ENCODE measurements at regions of chr17 and their contacts with region 1.

Region 1: DNA sequence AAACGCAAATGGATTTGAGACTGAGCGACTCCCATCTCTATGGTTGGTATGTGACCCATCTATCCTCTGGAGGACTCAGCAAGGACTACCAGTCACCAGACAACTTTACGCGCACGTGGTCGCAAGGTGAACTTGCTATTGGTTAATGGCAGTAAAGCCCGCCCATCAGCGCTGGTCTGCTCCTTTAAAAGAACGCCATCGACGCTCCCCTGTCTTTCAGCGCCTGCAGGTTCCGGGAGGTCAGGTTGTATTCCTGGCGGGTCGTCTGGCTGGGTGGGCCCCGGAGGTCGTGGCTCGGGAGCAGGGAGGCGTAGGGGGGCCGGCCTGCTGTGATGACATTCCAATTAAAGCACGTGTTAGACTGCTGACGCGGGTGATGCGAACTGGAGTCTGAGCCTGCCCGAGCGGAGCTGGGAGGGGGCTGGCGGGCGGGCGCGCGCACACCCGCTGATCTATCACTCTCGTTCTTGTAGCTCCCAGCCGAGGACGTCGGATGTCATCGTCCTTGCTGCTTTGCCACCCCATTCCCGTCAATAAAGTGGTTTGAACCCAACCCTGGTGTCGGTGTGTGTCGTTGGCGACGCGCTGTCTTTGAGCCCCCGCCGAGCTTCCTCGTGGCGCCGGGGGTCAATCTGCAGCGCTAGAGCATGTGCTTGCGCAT is 15.9 kb upstream of the ERN1 start:
- DNase-seq: peak; percentile 91 to 93
- H3K4me3 ChIP-seq: peak overlapping the region; percentile 79 to 91 (median 82)
- H3K27ac ChIP-seq: peak overlapping the region; percentile 95
- H3K4me1 ChIP-seq: peaks cover 0 to 9% (median 3%) of the 10 kb centered on the region in 4 experiments; a peak in 5 of 7 replicates
- H3K27me3 ChIP-seq: no peaks in the 10 kb centered on the region
- CTCF ChIP-seq: no peak
- EP300 ChIP-seq: no peak; a peak in 1 of 3 replicates
- POLR2A ChIP-seq: peak; percentile 98 to 100
- RAD21 ChIP-seq: no peak

Region 2: DNA sequence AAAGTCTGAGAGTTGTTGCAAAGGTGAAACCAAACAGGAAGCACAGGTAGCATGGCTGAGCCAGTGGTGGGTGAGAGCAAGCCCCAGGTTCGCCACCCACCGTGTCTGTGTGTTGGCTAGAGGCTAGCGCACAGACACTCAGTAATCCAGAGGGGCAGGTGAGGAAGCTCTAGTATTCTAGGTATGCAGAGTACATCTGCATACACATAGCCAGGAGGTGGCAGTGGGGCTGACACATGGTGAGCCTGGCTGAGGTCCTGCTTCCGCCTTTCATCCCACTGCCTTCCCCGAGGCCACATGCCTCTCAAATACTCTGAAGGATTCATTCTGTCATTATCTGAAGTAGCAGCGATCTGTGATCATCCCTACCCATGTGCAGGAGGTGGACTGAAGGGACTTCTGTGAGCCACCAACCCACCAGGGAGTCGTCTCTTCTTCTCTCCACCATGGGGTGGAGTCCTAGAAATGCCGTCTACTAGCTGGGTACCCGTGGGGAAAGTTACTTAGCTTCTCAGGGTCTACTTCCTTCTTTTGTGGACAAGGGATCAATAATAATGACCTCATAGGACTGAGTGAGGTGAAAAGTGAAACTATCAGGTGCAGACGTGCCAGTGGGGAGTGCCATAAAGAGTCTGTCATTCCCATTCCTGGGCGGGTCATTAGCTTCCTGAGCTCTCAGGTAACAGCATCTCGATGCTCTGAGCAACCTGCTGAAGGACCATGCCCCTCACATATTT is 89.5 kb before region 1 on chr17:
- CTCF ChIA-PET with region 1: interaction called, 238 read pairs
- POLR2A ChIA-PET with region 1: interaction called, 32 read pairs
- DNase-seq: peak; percentile 43 to 54
- H3K4me3 ChIP-seq: no peak overlapping the region
- H3K27ac ChIP-seq: no peak overlapping the region
- H3K4me1 ChIP-seq: peaks cover 3 to 9% (median 6%) of the 10 kb centered on the region in 4 experiments
- H3K27me3 ChIP-seq: no peaks in the 10 kb centered on the region
- CTCF ChIP-seq: no peak
- EP300 ChIP-seq: no peak
- POLR2A ChIP-seq: no peak
- RAD21 ChIP-seq: no peak

Region 3: DNA sequence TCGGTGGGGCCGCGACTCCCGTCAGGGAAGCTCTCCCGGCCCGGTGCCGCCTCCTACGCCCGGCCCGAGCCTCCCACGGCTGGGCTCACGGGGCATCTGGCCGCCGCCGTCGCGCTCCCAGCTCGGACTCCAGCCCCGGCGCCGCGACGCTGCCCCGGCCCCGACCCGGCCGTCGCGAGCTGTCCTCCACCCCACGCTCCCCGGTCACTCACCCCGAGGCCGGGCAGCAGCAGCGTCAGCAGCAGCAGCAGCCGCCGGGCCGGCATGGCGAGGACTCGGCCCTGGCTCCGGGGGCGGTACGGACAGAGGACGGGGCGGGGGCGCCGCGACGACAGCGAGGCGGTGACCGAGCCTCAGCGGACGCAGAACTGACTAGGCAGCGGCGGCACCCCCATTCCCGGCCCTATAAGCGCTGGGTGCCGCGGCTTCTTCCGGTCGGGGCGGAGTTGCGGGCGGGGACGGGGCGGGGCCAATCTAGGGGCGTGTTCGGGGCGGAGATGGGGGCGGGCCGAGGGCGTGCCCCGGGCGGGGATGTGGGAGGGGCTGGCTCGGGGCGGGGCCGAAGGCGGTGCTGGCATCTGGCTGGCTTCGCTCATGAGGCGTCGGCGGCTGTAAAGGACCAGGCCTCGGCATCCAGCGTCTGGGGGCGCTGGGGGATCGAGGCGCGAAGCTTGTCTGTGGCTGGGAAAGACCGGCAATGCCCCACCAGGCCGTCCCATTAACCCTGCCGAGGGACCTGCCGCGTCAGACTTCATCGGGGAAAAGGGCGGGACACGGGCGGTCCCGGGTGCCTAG is 15.9 kb before region 1 on chr17 and contains the start of gene ERN1:
- CTCF ChIA-PET with region 1: interaction called, 13 read pairs
- POLR2A ChIA-PET with region 1: interaction called, 164 read pairs
- DNase-seq: peak; percentile 81 to 91
- H3K4me3 ChIP-seq: peak within 1 kb of the TSS; percentile 69 to 79 (median 74)
- H3K27ac ChIP-seq: no peak within 1 kb of the TSS
- H3K4me1 ChIP-seq: no peaks in the 10 kb centered on the region
- H3K27me3 ChIP-seq: peaks cover 0 to 21% (median 11%) of the 10 kb centered on the region in 4 experiments; a peak in 6 of 7 replicates
- CTCF ChIP-seq: 0 out of 4 replicates have a peak, but pooled peaks of 1 of the 3 experiments have one; percentile 11
- EP300 ChIP-seq: no peak
- POLR2A ChIP-seq: peak; percentile 75 to 76
- RAD21 ChIP-seq: peak in 1 of 2 experiments; percentile 5; a peak in 1 of 4 replicates
- total RNA-seq, gene ERN1: 3.9 and 5.7 TPM in 2 replicates

Region 4: GRCh38 chr17:64202675-64203344 is 56.9 kb after region 1 on chr17:
- CTCF ChIA-PET with region 1: interaction called, 4 read pairs
- POLR2A ChIA-PET with region 1: interaction called, 20 read pairs
- DNase-seq: no peak
- H3K4me3 ChIP-seq: no peak overlapping the region
- H3K27ac ChIP-seq: no peak overlapping the region
- H3K4me1 ChIP-seq: peaks cover 1 to 13% (median 6%) of the 10 kb centered on the region in 4 experiments; a peak in 5 of 7 replicates
- H3K27me3 ChIP-seq: no peaks in the 10 kb centered on the region
- CTCF ChIP-seq: no peak
- EP300 ChIP-seq: no peak
- POLR2A ChIP-seq: no peak
- RAD21 ChIP-seq: no peak

Region 5: GRCh38 chr17:64262417-64263260 is 116.8 kb after region 1 on chr17 and contains the start of gene TEX2:
- CTCF ChIA-PET with region 1: no interaction called
- POLR2A ChIA-PET with region 1: interaction called, 62 read pairs
- DNase-seq: peak in 1 of 2 experiments; percentile 54
- H3K4me3 ChIP-seq: peak within 1 kb of the TSS; percentile 72 to 97 (median 84)
- H3K27ac ChIP-seq: peak within 1 kb of the TSS; percentile 94
- H3K4me1 ChIP-seq: peaks cover 1 to 5% (median 4%) of the 10 kb centered on the region in 4 experiments; a peak in 4 of 7 replicates
- H3K27me3 ChIP-seq: peaks cover 0 to 9% (median 8%) of the 10 kb centered on the region in 4 experiments; a peak in 4 of 7 replicates
- CTCF ChIP-seq: no peak
- EP300 ChIP-seq: no peak
- POLR2A ChIP-seq: no peak
- RAD21 ChIP-seq: no peak
- total RNA-seq, gene TEX2: 15.6 and 16.3 TPM in 2 replicates

Region 6: DNA sequence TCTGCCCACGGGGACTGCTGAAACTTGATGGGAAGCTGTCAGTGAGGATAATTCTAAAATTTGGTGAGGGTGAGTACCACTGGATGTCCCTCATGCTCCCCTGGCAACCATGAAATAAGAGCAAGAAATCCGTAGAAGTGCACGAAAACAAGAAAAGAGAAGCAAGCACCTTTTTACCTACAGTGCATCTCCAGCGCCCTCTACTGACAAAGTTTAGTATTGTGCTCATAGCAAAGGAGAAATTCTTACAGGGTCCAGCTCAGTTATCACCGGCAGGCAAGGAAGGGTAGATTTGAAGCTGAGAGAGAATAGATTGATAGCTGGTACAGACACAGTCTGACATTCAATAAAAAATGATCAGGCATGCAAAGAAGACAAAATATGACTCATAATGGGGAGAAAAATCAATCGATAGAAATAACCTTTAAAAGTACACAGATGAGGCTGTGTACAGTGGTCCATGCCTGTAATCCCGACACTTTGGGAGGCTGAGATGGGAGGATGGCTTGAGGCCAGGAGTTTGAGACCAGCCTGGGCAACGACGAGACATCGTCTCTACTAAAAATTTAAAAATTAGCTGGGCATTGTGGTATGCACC is 145.5 kb after region 1 on chr17:
- CTCF ChIA-PET with region 1: interaction called, 10 read pairs
- POLR2A ChIA-PET with region 1: interaction called, 11 read pairs
- DNase-seq: no peak
- H3K4me3 ChIP-seq: no peak overlapping the region
- H3K27ac ChIP-seq: no peak overlapping the region
- H3K4me1 ChIP-seq: no peaks in the 10 kb centered on the region
- H3K27me3 ChIP-seq: no peaks in the 10 kb centered on the region
- CTCF ChIP-seq: peak in 2 of 3 experiments; percentile 47 to 69; a peak in 3 of 4 replicates
- EP300 ChIP-seq: no peak
- POLR2A ChIP-seq: no peak
- RAD21 ChIP-seq: peak; percentile 58 to 65

Measured in H1 (cell line).